ENCODE measurements at regions of chr12 and their contacts with region 1.

Region 1: GRCh38 chr12:92987362-92987761 is 58.3 kb upstream of the EEA1 start:
- DNase-seq: peak; percentile 78
- ATAC-seq: peak; percentile 77
- H3K4me3 ChIP-seq: no peak overlapping the region; a peak in 1 of 6 replicates
- H3K27ac ChIP-seq: peak overlapping the region; percentile 57
- H3K4me1 ChIP-seq: peaks cover 45% of the 10 kb centered on the region
- H3K27me3 ChIP-seq: no peaks in the 10 kb centered on the region
- CTCF ChIP-seq: peak; percentile 73
- EP300 ChIP-seq: no peak
- POLR2A ChIP-seq: no peak
- RAD21 ChIP-seq: peak; percentile 77

Region 2: GRCh38 chr12:92784795-92785562 is 202.4 kb before region 1 on chr12:
- CTCF ChIA-PET with region 1: no interaction called
- POLR2A ChIA-PET with region 1: no interaction called
- in situ Hi-C with region 1: no loop called
- intact Hi-C with region 1: loop called (anchors 1 kb)
- DNase-seq: peak; percentile 85
- ATAC-seq: peak; percentile 100
- H3K4me3 ChIP-seq: no peak overlapping the region
- H3K27ac ChIP-seq: no peak overlapping the region
- H3K4me1 ChIP-seq: no peaks in the 10 kb centered on the region
- H3K27me3 ChIP-seq: no peaks in the 10 kb centered on the region
- CTCF ChIP-seq: peak; percentile 85
- EP300 ChIP-seq: no peak
- POLR2A ChIP-seq: no peak
- RAD21 ChIP-seq: peak; percentile 75

Region 3: GRCh38 chr12:92854344-92854743 is 133.0 kb before region 1 on chr12:
- CTCF ChIA-PET with region 1: no interaction called
- POLR2A ChIA-PET with region 1: no interaction called
- in situ Hi-C with region 1: no loop called
- intact Hi-C with region 1: no loop called
- DNase-seq: peak; percentile 52
- ATAC-seq: peak; percentile 86
- H3K4me3 ChIP-seq: no peak overlapping the region
- H3K27ac ChIP-seq: peak overlapping the region; percentile 40
- H3K4me1 ChIP-seq: peaks cover 21% of the 10 kb centered on the region
- H3K27me3 ChIP-seq: no peaks in the 10 kb centered on the region
- CTCF ChIP-seq: no peak
- EP300 ChIP-seq: no peak
- POLR2A ChIP-seq: no peak
- RAD21 ChIP-seq: no peak

Region 4: DNA sequence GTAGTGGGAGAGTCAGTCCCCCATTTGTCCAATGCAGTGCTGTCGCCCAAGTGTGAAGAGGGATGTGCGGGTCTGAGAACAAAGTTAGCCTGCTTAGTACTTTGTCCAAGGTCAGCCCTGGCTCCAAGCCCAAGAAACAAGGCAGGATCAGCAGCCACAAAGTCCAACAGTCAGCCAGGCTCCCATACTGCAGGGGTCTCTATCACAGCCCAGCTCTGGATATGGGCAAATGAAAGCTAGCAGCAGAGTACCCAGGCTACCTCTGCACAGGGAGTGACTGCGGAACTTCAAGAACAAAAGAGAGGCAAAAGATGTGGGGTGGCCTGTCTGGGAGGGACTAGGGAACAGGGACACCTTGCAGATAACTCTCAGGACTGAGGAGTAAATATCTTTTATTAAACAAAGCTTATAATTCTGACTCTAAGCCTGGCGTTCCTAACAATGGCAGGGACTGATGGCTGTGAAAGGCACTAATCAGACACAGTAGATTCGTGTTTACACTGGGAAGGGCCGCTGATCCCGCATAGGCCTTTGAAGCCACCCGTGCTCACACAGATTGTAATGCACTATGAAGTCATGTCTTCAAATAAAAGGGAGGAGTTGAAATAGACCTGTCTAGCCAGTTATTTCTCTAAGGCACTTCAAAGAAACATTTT is 32.7 kb after region 1 on chr12:
- CTCF ChIA-PET with region 1: no interaction called
- POLR2A ChIA-PET with region 1: interaction called, 35 read pairs
- in situ Hi-C with region 1: no loop called
- intact Hi-C with region 1: loop called (anchors 1 kb)
- DNase-seq: peak; percentile 98
- ATAC-seq: peak; percentile 94
- H3K4me3 ChIP-seq: peak overlapping the region; percentile 19 to 59 (median 31); a peak in 4 of 6 replicates
- H3K27ac ChIP-seq: peak overlapping the region; percentile 94
- H3K4me1 ChIP-seq: peaks cover 98% of the 10 kb centered on the region
- H3K27me3 ChIP-seq: no peaks in the 10 kb centered on the region
- CTCF ChIP-seq: no peak
- EP300 ChIP-seq: peak; percentile 83 to 94; a peak in 3 of 4 replicates
- POLR2A ChIP-seq: no peak; a peak in 1 of 4 replicates
- RAD21 ChIP-seq: peak; percentile 23; the same call in 1 of the 2 replicates

Region 5: GRCh38 chr12:93279565-93280412 is 292.4 kb after region 1 on chr12:
- CTCF ChIA-PET with region 1: no interaction called
- POLR2A ChIA-PET with region 1: no interaction called
- in situ Hi-C with region 1: no loop called
- intact Hi-C with region 1: loop called (anchors 5 kb)
- DNase-seq: no peak
- ATAC-seq: peak; percentile 48
- H3K4me3 ChIP-seq: no peak overlapping the region
- H3K27ac ChIP-seq: no peak overlapping the region
- H3K4me1 ChIP-seq: peaks cover 41% of the 10 kb centered on the region
- H3K27me3 ChIP-seq: no peaks in the 10 kb centered on the region; a peak in 1 of 5 replicates
- CTCF ChIP-seq: no peak
- EP300 ChIP-seq: no peak
- POLR2A ChIP-seq: no peak
- RAD21 ChIP-seq: no peak

Region 6: GRCh38 chr12:93397412-93397811 is 410.1 kb after region 1 on chr12:
- CTCF ChIA-PET with region 1: interaction called, 11 read pairs
- POLR2A ChIA-PET with region 1: no interaction called
- in situ Hi-C with region 1: loop called (anchors 10 kb)
- intact Hi-C with region 1: loop called (anchors 2 kb)
- DNase-seq: no peak
- ATAC-seq: no peak
- H3K4me3 ChIP-seq: no peak overlapping the region
- H3K27ac ChIP-seq: no peak overlapping the region
- H3K4me1 ChIP-seq: peaks cover 16% of the 10 kb centered on the region
- H3K27me3 ChIP-seq: no peaks in the 10 kb centered on the region
- CTCF ChIP-seq: no peak
- EP300 ChIP-seq: no peak
- POLR2A ChIP-seq: no peak
- RAD21 ChIP-seq: no peak

Measured in HepG2 (cell line).